Endothelial cell of umbilical vein (primary cell): ENCODE measurements at regions of chr4 and their contacts with region 1.

Region 1: GRCh38 chr4:89164400-89164799 is 53.1 kb downstream of the TIGD2 start:
- DNase-seq: no peak
- H3K4me3 ChIP-seq: no peak overlapping the region
- H3K27ac ChIP-seq: no peak overlapping the region
- H3K4me1 ChIP-seq: peaks cover 18% of the 10 kb centered on the region
- H3K27me3 ChIP-seq: no peaks in the 10 kb centered on the region
- CTCF ChIP-seq: peak in 1 of 2 donors; percentile 3
- POLR2A ChIP-seq: no peak

Region 2: DNA sequence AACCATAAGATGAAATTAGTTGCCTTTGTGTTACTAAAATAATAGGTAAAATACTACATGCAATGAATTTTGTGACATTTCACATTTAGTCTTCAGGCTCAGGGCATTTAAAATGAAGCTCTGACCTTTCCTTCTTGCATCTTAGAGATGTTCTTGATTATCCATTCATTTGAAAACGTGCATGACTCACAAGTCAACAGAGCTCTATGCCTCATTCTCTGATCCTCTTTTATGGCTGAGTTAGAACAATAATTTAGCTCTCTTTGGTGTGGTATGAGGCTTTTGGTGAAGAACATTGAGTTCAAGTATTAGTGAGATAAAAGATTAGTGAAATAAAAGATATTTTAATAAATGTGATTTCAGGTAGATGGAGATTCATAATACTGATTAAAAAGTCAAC is 13.4 kb after region 1 on chr4:
- CTCF ChIA-PET with region 1: interaction called, 11 read pairs
- POLR2A ChIA-PET with region 1: no interaction called
- dilution Hi-C with region 1: no loop called
- intact Hi-C with region 1: no loop called
- DNase-seq: no peak
- H3K4me3 ChIP-seq: no peak overlapping the region
- H3K27ac ChIP-seq: no peak overlapping the region
- H3K4me1 ChIP-seq: no peaks in the 10 kb centered on the region
- H3K27me3 ChIP-seq: peaks cover 0 to 2% of the 10 kb centered on the region in 2 experiments
- CTCF ChIP-seq: no peak
- POLR2A ChIP-seq: no peak

Region 3: DNA sequence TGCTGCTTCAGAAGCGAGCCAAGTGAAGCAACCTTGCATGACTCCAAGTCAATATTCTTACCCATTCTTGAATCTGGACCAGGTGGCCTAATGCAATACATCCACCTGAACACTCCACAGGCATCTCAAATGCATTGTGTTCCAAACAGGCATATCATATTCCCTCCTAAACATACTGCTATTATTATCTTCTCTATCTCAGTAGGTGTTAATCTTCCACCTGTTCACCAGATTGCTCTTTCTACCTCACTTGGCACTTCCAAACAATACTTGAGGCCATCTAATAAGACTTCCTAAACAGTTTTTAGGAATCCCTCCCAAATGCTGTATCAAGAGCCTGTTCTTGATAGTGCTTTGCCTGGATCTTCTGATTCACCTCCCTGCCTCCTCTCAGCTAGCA is 52.5 kb after region 1 on chr4:
- CTCF ChIA-PET with region 1: interaction called, 3 read pairs
- POLR2A ChIA-PET with region 1: interaction called, 10 read pairs
- dilution Hi-C with region 1: no loop called
- intact Hi-C with region 1: no loop called
- DNase-seq: no peak
- H3K4me3 ChIP-seq: no peak overlapping the region
- H3K27ac ChIP-seq: no peak overlapping the region
- H3K4me1 ChIP-seq: no peaks in the 10 kb centered on the region
- H3K27me3 ChIP-seq: peaks cover 13 to 14% of the 10 kb centered on the region in 2 experiments
- CTCF ChIP-seq: no peak
- POLR2A ChIP-seq: no peak

Region 4: GRCh38 chr4:89509708-89510281 is 345.4 kb after region 1 on chr4:
- CTCF ChIA-PET with region 1: no interaction called
- POLR2A ChIA-PET with region 1: no interaction called
- dilution Hi-C with region 1: no loop called
- intact Hi-C with region 1: no loop called
- DNase-seq: no peak
- H3K4me3 ChIP-seq: no peak overlapping the region
- H3K27ac ChIP-seq: no peak overlapping the region
- H3K4me1 ChIP-seq: peaks cover 9% of the 10 kb centered on the region
- H3K27me3 ChIP-seq: no peaks in the 10 kb centered on the region
- CTCF ChIP-seq: no peak
- POLR2A ChIP-seq: no peak